Heart left ventricle (tissue), 16 donors: ENCODE measurements at regions of chr2 and their contacts with region 1.

Region 1: GRCh38 chr2:19851116-19851695 is 50.6 kb downstream of the TTC32 start:
- DNase-seq: no peak
- ATAC-seq: no peak
- H3K4me3 ChIP-seq: no peak overlapping the region
- H3K27ac ChIP-seq: no peak overlapping the region
- H3K4me1 ChIP-seq: peaks cover 0 to 5% (median 0%) of the 10 kb centered on the region in 12 donors
- H3K27me3 ChIP-seq: no peaks in the 10 kb centered on the region
- CTCF ChIP-seq: no peak
- POLR2A ChIP-seq: no peak

Region 2: DNA sequence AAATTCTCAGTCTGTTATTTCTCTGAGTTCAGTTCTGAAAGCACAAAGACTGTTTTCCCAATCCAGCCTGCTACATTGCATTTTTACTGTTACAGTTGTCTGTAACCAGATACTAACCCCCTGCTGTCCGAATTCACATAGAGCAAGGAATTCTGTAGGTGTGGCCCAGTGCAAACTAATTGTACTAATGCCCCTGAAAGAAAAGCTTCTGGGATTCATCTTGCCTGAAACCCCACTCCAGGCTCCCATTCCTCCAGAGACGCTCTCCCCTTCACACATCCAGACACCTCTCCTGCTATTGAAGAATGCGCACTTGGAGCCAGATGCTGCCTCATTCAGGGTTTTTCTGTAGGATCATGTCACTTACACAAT is 76.4 kb before region 1 on chr2:
- intact Hi-C with region 1: loop called in 1 of 10 experiments (anchors 5 kb)
- DNase-seq: no peak
- ATAC-seq: no peak
- H3K4me3 ChIP-seq: no peak overlapping the region
- H3K27ac ChIP-seq: peak overlapping the region in 1 of 12 donors; percentile 5
- H3K4me1 ChIP-seq: peaks cover 0 to 14% (median 4%) of the 10 kb centered on the region in 12 donors
- H3K27me3 ChIP-seq: no peaks in the 10 kb centered on the region
- CTCF ChIP-seq: no peak
- POLR2A ChIP-seq: no peak